Activated CD4-positive, alpha-beta T cell treated with anti-CD3 and anti-CD28 coated beads, Interleukin-2, amount 10 ng/mL, durations not matched to agents 24 days and 14 days (primary cell): ENCODE measurements at regions of chr11 and their contacts with region 1.

Region 1: GRCh38 chr11:9748361-9748970 is 84.6 kb downstream of the SWAP70 start:
- DNase-seq: peak; percentile 90
- H3K4me3 Mint-ChIP-seq: no peak overlapping the region
- H3K27ac Mint-ChIP-seq: no peak overlapping the region
- H3K4me1 Mint-ChIP-seq: peaks cover 19% of the 10 kb centered on the region
- H3K27me3 Mint-ChIP-seq: no peaks in the 10 kb centered on the region

Region 2: DNA sequence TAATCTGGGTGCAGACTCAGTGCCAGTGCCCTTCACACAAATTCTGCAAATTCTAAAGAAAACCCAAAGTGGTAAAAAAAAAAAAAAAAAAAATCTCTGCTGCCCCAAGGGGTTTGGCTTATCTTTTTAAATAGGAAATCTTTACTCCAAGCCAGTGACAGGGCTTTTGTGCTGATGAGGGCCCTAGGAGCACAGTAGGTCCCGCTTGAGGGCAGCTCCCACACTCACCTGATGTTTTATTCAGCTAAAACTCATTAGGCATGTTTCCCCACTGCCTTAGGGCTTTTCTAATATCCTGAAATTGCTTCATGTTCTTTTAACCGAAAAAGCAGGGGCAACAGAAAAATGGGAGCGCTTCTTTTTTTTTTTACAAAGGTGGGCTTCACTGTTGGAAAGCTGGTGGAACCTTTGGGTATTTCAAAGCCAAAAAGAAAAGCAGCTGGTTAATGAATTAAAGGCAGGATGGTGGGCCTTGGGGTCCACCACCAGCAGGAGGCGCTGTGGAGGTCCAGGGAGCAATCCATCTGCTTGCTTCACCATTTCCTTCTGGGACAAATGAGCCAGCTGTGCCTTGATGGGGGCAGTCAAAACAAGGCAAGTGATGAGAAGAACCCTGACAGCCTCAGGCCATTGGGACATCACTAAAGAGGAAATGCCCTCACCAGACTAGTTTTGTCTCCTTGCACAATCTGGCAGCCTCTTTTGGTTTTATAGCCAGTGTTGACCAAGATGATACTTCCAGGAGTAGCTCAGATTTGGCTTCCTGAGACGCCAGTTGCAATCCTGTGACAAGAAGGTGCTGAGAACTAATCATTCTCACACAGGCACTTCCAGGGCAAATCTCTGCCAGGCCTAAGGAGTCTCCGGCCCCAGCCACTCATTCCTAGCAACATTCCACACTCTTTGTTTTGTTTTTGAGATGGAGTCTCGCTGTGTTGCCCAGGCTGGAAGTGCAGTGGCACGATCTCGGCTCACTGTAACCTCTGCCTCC is 213.4 kb before region 1 on chr11:
- intact Hi-C with region 1: loop called (anchors 1 kb)
- DNase-seq: peak; percentile 93
- H3K4me3 Mint-ChIP-seq: no peak overlapping the region
- H3K27ac Mint-ChIP-seq: no peak overlapping the region
- H3K4me1 Mint-ChIP-seq: no peaks in the 10 kb centered on the region
- H3K27me3 Mint-ChIP-seq: no peaks in the 10 kb centered on the region

Region 3: DNA sequence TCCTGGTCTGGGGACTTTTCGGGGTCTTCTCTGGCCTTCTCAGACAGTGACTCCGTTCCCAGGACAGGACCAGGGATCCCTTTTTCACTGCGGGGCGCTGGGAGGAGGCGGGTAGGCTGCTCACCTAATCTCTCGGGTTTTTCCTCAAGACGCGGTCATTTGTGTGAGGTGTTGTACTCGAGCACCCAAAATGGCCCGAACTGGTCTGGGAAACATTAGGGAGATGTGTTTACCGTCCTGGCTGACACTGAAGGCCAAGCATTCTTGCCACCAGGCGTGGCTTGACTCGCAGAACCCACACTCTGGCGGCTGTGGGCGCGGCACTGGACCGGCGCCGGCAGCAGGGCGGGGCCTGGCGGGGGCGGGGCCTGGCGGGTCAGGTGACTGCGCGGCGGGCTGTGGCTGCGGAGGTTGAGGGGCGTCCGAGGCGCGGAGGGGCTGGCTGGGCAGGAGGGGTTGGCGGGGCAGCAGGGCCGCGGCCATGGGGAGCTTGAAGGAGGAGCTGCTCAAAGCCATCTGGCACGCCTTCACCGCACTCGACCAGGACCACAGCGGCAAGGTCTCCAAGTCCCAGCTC is 84.7 kb before region 1 on chr11 and contains the start of gene SWAP70:
- intact Hi-C with region 1: loop called (anchors 5 kb)
- DNase-seq: peak; percentile 95
- H3K4me3 Mint-ChIP-seq: peak within 1 kb of the TSS; percentile 90
- H3K27ac Mint-ChIP-seq: peak within 1 kb of the TSS; percentile 51
- H3K4me1 Mint-ChIP-seq: peaks cover 18% of the 10 kb centered on the region
- H3K27me3 Mint-ChIP-seq: peaks cover 34% of the 10 kb centered on the region
- total RNA-seq, gene SWAP70: 7.3 and 8.1 TPM in 2 replicates

Region 4: GRCh38 chr11:9688716-9689511 is 59.6 kb before region 1 on chr11:
- intact Hi-C with region 1: loop called (anchors 2 kb)
- DNase-seq: peak; percentile 62
- H3K4me3 Mint-ChIP-seq: no peak overlapping the region
- H3K27ac Mint-ChIP-seq: no peak overlapping the region
- H3K4me1 Mint-ChIP-seq: peaks cover 3% of the 10 kb centered on the region
- H3K27me3 Mint-ChIP-seq: no peaks in the 10 kb centered on the region

Region 5: GRCh38 chr11:9716275-9717039 is 32.0 kb before region 1 on chr11:
- intact Hi-C with region 1: no loop called
- DNase-seq: peak; percentile 61
- H3K4me3 Mint-ChIP-seq: peak overlapping the region; percentile 31
- H3K27ac Mint-ChIP-seq: peak overlapping the region; percentile 63
- H3K4me1 Mint-ChIP-seq: peaks cover 20% of the 10 kb centered on the region
- H3K27me3 Mint-ChIP-seq: peaks cover 3% of the 10 kb centered on the region

Region 6: GRCh38 chr11:9972989-9973388 is 224.5 kb after region 1 on chr11:
- intact Hi-C with region 1: loop called (anchors 2 kb)
- DNase-seq: peak; percentile 80
- H3K4me3 Mint-ChIP-seq: no peak overlapping the region
- H3K27ac Mint-ChIP-seq: no peak overlapping the region
- H3K4me1 Mint-ChIP-seq: peaks cover 4% of the 10 kb centered on the region
- H3K27me3 Mint-ChIP-seq: no peaks in the 10 kb centered on the region